Activated CD8-positive, alpha-beta memory T cell treated with anti-CD3 and anti-CD28 coated beads, Interleukin-2, amount 10 ng/mL, durations not matched to agents 7 days and 5 days (primary cell): ENCODE measurements at regions of chr2 and their contacts with region 1.

Region 1: GRCh38 chr2:98822301-98823164 is 91.6 kb upstream of the MGAT4A start:
- DNase-seq: peak; percentile 72
- ATAC-seq: peak; percentile 97
- H3K4me3 Mint-ChIP-seq: peak overlapping the region; percentile 18
- H3K27ac Mint-ChIP-seq: no peak overlapping the region
- H3K4me1 Mint-ChIP-seq: peaks cover 5% of the 10 kb centered on the region
- H3K27me3 Mint-ChIP-seq: peaks cover 7% of the 10 kb centered on the region

Region 2: DNA sequence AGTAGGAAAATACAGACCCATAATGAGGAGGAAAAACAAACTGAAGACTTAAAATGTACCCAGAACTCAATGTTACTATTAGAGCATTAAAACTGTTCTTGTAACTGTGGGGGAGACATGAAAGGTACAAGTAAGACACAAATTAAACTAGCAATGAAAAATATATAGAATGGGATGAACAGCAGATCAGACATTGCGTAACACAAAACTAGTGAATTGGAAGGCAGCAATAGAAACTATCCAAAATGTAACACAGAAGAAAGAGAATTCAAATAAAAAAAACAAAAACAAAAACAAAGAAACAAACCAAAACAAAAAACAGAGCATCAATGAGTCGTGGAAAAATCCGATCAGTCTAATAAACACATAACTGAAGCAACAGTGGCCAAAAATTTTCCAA is 603.4 kb before region 1 on chr2:
- CTCF ChIA-PET with region 1: no interaction called
- DNase-seq: no peak
- ATAC-seq: no peak
- H3K4me3 Mint-ChIP-seq: no peak overlapping the region
- H3K27ac Mint-ChIP-seq: no peak overlapping the region
- H3K4me1 Mint-ChIP-seq: no peaks in the 10 kb centered on the region
- H3K27me3 Mint-ChIP-seq: peaks cover 22% of the 10 kb centered on the region

Region 3: DNA sequence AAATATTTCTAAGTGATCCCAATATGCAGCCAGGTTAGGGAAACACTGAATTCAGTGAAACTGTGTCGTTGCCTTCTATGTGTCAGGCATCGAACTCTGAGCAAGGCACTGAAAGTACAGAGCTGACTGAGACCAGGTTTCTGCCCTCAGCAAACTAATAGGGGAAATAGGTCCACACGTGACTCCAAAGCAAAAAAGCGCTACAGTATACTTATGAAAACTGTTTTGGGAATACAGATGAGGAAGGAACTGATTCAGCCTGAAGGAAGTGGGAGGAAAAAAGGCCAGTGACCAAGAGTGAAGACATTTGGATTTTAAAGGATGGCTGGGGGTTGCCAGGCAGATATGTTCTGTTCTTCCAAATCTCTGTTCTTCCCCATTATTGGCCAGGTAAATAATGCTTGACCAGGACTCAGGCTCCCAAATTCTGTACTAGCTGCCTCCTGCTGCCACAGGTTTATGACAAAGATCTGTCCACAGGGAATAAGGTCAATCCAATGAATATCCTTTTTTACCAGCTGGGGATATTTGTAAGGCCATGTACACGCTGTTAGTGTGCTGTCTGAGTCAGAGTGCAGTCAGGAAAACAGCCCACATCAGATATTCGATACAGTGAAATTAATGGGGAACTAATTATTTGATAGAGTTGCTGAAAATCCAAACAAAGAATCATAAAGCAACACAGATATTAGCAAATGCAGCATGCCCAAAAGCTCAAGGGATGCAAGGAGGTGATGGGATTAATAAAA is 402.4 kb before region 1 on chr2:
- CTCF ChIA-PET with region 1: no interaction called
- DNase-seq: no peak
- ATAC-seq: no peak
- H3K4me3 Mint-ChIP-seq: no peak overlapping the region
- H3K27ac Mint-ChIP-seq: no peak overlapping the region
- H3K4me1 Mint-ChIP-seq: peaks cover 10% of the 10 kb centered on the region
- H3K27me3 Mint-ChIP-seq: no peaks in the 10 kb centered on the region

Region 4: DNA sequence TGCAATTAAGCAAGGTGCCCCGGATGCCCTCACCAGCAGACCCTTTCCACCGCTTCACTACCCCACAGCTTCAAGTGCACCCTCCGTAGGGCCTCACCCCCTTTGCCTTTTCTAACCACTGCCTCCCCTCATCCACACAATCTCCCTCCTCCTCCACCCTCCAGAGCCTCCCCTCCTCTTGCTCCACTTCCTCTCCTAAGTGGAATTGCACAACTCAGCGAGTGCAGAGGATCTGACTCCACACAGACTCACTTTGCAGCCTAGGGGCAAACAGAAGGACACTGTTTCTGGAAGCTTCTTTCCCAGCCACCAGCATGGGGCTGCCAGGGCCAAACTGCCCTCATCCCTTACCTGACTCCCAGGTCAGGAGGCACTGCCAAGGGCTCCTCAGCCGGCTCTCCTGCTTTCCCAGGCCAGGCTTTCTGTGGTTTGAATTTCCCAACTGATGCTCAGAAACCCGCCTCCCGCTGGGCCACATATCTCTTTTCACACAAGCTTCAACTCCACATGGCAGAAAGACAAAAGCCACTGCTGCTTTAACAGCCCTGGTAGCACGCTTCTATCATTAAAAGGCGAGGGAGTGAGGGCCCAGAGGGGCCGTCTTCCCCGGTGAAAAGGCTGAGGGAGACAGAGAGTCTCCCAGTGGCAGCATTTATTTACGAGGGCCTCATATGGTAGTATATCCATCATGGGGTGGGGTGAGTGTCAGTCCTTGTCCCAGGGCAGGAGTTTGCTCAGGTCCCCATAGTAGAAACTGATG is 16.9 kb before region 1 on chr2:
- CTCF ChIA-PET with region 1: interaction called, 13 read pairs
- DNase-seq: no peak
- ATAC-seq: no peak
- H3K4me3 Mint-ChIP-seq: no peak overlapping the region
- H3K27ac Mint-ChIP-seq: no peak overlapping the region
- H3K4me1 Mint-ChIP-seq: peaks cover 9% of the 10 kb centered on the region
- H3K27me3 Mint-ChIP-seq: no peaks in the 10 kb centered on the region